ENCODE measurements at regions of chr20 and their contacts with region 1.

Region 1: GRCh38 chr20:25057234-25058050 is 497 bp downstream of the ACSS1 start:
- DNase-seq: peak; percentile 72
- ATAC-seq: peak; percentile 42
- H3K4me3 Mint-ChIP-seq: peak overlapping the region; percentile 89
- H3K27ac Mint-ChIP-seq: peak overlapping the region; percentile 93
- H3K4me1 Mint-ChIP-seq: peaks cover 61% of the 10 kb centered on the region
- H3K27me3 Mint-ChIP-seq: no peaks in the 10 kb centered on the region
- CTCF ChIP-seq: no peak

Region 2: DNA sequence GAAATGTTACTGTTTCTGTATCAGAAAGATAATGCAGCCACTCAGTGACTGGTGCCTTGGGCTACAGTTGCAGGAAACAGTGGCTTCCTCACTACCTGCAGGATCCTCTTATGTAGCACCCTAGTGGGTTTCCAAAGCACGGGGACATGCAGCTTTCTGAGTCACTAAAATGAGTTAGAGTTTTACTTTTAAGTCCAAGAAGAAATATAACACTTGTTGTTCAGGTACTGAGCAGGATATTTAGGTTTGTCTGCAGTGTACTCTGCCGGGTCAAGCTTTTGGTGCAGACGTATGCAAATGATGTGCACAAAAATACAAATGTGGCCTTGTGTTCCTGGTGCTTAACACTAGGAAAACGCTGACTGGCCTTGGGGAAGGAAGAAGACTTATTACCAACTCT is 21.5 kb before region 1 on chr20:
- CTCF ChIA-PET with region 1: no interaction called
- POLR2A ChIA-PET with region 1: interaction called, 40 read pairs
- intact Hi-C with region 1: loop called (anchors 1 kb)
- DNase-seq: no peak
- ATAC-seq: no peak
- H3K4me3 Mint-ChIP-seq: peak overlapping the region; percentile 61
- H3K27ac Mint-ChIP-seq: peak overlapping the region; percentile 84
- H3K4me1 Mint-ChIP-seq: peaks cover 62% of the 10 kb centered on the region
- H3K27me3 Mint-ChIP-seq: no peaks in the 10 kb centered on the region
- CTCF ChIP-seq: no peak

Region 3: GRCh38 chr20:25195014-25195961 is 137.8 kb after region 1 on chr20 and contains the start of gene ENTPD6:
- CTCF ChIA-PET with region 1: no interaction called
- POLR2A ChIA-PET with region 1: interaction called, 11 read pairs
- intact Hi-C with region 1: no loop called
- DNase-seq: peak; percentile 99
- ATAC-seq: peak; percentile 82
- H3K4me3 Mint-ChIP-seq: peak within 1 kb of the TSS; percentile 90
- H3K27ac Mint-ChIP-seq: peak within 1 kb of the TSS; percentile 86
- H3K4me1 Mint-ChIP-seq: peaks cover 20% of the 10 kb centered on the region
- H3K27me3 Mint-ChIP-seq: no peaks in the 10 kb centered on the region
- CTCF ChIP-seq: no peak
- total RNA-seq, gene ENTPD6: 37.2 and 44.4 TPM in 2 replicates

Region 4: DNA sequence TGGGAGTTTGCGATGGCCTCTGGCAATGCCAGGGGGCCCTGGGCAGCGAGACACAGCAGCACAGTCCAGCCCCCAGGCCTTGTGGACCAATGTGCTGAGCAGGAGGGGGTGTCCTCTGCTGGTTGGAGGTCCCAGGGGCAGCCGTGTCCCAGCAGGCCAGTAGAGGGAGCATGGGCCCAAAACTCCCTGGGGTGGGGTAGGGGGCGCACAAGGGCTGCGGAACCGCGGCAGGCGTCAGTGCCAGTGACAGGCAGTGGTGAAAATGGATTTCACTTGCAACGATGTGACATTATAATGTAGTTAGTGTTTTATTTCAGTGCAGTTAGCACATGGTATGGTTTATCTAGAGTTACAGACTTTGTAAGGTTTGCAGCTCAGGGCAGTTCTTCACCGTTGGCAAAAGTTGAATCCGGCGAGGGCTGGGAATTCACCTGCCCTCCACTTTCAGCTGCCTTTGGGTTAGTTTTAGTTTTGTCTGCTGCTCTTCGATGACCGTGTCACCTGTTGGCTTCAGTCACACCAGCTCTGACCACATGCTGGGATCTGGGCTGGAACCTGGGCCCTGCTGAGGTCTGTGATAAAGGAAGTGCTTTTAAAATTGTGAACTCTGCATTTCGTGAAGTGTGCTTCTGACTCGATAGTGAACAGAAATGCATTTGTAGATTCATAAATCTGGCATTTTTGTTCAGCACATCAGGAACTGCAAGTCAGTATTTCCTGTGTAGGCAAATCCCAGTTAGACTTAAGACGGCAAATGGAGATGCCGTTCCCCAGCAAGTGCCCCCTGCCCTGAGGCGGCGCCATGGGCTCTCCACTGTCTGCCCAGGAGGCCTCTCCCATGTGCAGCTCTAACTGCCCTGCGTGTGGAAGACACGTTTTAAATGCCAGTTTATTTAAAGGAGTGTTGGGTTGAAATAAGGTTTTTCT is 237.3 kb after region 1 on chr20:
- CTCF ChIA-PET with region 1: no interaction called
- POLR2A ChIA-PET with region 1: no interaction called
- intact Hi-C with region 1: loop called (anchors 5 kb)
- DNase-seq: peak; percentile 54
- ATAC-seq: peak; percentile 92
- H3K4me3 Mint-ChIP-seq: no peak overlapping the region
- H3K27ac Mint-ChIP-seq: no peak overlapping the region
- H3K4me1 Mint-ChIP-seq: peaks cover 5% of the 10 kb centered on the region
- H3K27me3 Mint-ChIP-seq: no peaks in the 10 kb centered on the region
- CTCF ChIP-seq: no peak

Region 5: GRCh38 chr20:25390538-25391528 is 333.4 kb after region 1 on chr20 and contains the start of gene ABHD12:
- CTCF ChIA-PET with region 1: no interaction called
- POLR2A ChIA-PET with region 1: interaction called, 3 read pairs
- intact Hi-C with region 1: loop called (anchors 2 kb)
- DNase-seq: peak; percentile 85
- ATAC-seq: peak; percentile 93
- H3K4me3 Mint-ChIP-seq: peak within 1 kb of the TSS; percentile 85
- H3K27ac Mint-ChIP-seq: peak within 1 kb of the TSS; percentile 76
- H3K4me1 Mint-ChIP-seq: peaks cover 17% of the 10 kb centered on the region
- H3K27me3 Mint-ChIP-seq: no peaks in the 10 kb centered on the region
- CTCF ChIP-seq: no peak
- total RNA-seq, gene ABHD12: 16.1 and 16.3 TPM in 2 replicates